ENCODE measurements at regions of chr15 and their contacts with region 1.

Region 1: GRCh38 chr15:99662903-99663302 is 70.3 kb downstream of the LYSMD4 start:
- DNase-seq: no peak
- ATAC-seq: no peak
- H3K4me3 Mint-ChIP-seq: no peak overlapping the region
- H3K27ac Mint-ChIP-seq: no peak overlapping the region
- H3K4me1 Mint-ChIP-seq: peaks cover 12% of the 10 kb centered on the region
- H3K27me3 Mint-ChIP-seq: no peaks in the 10 kb centered on the region
- CTCF ChIP-seq: no peak

Region 2: GRCh38 chr15:99613887-99614647 is 48.8 kb before region 1 on chr15:
- CTCF ChIA-PET with region 1: no interaction called
- POLR2A ChIA-PET with region 1: no interaction called
- intact Hi-C with region 1: loop called (anchors 5 kb)
- DNase-seq: no peak
- ATAC-seq: no peak
- H3K4me3 Mint-ChIP-seq: peak overlapping the region; percentile 50
- H3K27ac Mint-ChIP-seq: peak overlapping the region; percentile 72
- H3K4me1 Mint-ChIP-seq: peaks cover 74% of the 10 kb centered on the region
- H3K27me3 Mint-ChIP-seq: no peaks in the 10 kb centered on the region
- CTCF ChIP-seq: no peak

Region 3: DNA sequence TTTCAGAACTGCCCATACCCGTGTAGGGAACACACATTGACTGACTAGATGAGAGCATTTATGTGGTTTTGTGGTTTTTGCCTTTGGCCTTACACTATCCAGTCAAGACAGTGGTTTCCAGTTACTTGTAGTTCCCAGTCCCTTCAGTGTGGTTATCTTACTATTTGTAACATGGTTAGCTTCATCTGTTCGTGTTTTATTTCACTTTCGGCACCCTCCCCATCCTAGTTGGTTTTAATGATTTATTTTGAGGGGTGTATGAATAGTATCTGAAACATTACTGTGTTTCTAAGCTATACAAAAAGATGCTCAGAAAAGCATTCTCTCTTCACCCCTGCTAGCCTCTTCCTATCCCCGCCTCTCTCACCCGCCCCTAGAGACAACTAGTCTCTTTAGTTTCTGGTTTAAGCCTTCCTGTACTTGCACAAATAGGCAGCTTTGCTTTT is 56.2 kb after region 1 on chr15:
- CTCF ChIA-PET with region 1: no interaction called
- POLR2A ChIA-PET with region 1: no interaction called
- intact Hi-C with region 1: no loop called
- DNase-seq: no peak
- ATAC-seq: no peak
- H3K4me3 Mint-ChIP-seq: no peak overlapping the region
- H3K27ac Mint-ChIP-seq: no peak overlapping the region
- H3K4me1 Mint-ChIP-seq: peaks cover 41% of the 10 kb centered on the region
- H3K27me3 Mint-ChIP-seq: no peaks in the 10 kb centered on the region
- CTCF ChIP-seq: no peak